ENCODE measurements at regions of chr1 and their contacts with region 1.

Region 1: DNA sequence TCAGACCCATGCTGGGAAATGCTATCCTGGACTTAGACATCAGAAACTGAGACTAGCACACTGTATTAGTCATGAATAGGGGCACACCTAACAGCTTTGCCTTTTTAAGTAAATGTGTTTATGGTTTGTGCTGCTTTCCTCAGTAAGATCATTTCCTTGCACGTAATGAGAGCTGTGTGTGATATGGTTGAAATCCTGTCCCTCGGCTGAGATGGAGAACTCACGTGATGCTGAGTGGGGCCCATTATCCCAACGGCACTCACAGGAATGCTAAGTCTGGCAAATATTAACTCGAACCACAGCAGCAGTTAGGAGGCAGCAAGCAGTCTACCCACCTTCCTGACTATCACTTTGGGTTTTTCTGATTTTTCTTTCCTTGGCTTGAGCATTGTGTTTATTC is 38.2 kb downstream of the BCL9 start:
- DNase-seq: peak; percentile 73
- ATAC-seq: peak; percentile 99
- H3K4me3 ChIP-seq: peak overlapping the region in 2 of 3 experiments; percentile 23 to 30; a peak in 2 of 6 replicates
- H3K27ac ChIP-seq: no peak overlapping the region
- H3K4me1 ChIP-seq: peaks cover 29% of the 10 kb centered on the region
- H3K27me3 ChIP-seq: no peaks in the 10 kb centered on the region
- CTCF ChIP-seq: no peak
- EP300 ChIP-seq: peak in 1 of 2 experiments; percentile 38; a peak in 1 of 4 replicates
- POLR2A ChIP-seq: no peak
- RAD21 ChIP-seq: no peak

Region 2: GRCh38 chr1:147541672-147542568 is 37.6 kb before region 1 on chr1:
- CTCF ChIA-PET with region 1: no interaction called
- POLR2A ChIA-PET with region 1: no interaction called
- in situ Hi-C with region 1: loop called (anchors 5 kb)
- intact Hi-C with region 1: no loop called
- DNase-seq: no peak
- ATAC-seq: peak; percentile 55
- H3K4me3 ChIP-seq: peak overlapping the region in 2 of 3 experiments; percentile 38 to 58; a peak in 2 of 6 replicates
- H3K27ac ChIP-seq: no peak overlapping the region
- H3K4me1 ChIP-seq: peaks cover 29% of the 10 kb centered on the region
- H3K27me3 ChIP-seq: peaks cover 0 to 13% of the 10 kb centered on the region in 2 experiments; a peak in 2 of 5 replicates
- CTCF ChIP-seq: no peak
- EP300 ChIP-seq: no peak
- POLR2A ChIP-seq: no peak
- RAD21 ChIP-seq: no peak

Region 3: GRCh38 chr1:147741065-147741464 is 161.5 kb after region 1 on chr1:
- CTCF ChIA-PET with region 1: no interaction called
- POLR2A ChIA-PET with region 1: no interaction called
- in situ Hi-C with region 1: no loop called
- intact Hi-C with region 1: no loop called
- DNase-seq: no peak
- ATAC-seq: no peak
- H3K4me3 ChIP-seq: no peak overlapping the region
- H3K27ac ChIP-seq: no peak overlapping the region
- H3K4me1 ChIP-seq: no peaks in the 10 kb centered on the region
- H3K27me3 ChIP-seq: no peaks in the 10 kb centered on the region
- CTCF ChIP-seq: no peak
- EP300 ChIP-seq: no peak
- POLR2A ChIP-seq: no peak
- RAD21 ChIP-seq: no peak

Measured in HepG2 (cell line).